ENCODE measurements at regions of chr16 and their contacts with region 1.

Region 1: DNA sequence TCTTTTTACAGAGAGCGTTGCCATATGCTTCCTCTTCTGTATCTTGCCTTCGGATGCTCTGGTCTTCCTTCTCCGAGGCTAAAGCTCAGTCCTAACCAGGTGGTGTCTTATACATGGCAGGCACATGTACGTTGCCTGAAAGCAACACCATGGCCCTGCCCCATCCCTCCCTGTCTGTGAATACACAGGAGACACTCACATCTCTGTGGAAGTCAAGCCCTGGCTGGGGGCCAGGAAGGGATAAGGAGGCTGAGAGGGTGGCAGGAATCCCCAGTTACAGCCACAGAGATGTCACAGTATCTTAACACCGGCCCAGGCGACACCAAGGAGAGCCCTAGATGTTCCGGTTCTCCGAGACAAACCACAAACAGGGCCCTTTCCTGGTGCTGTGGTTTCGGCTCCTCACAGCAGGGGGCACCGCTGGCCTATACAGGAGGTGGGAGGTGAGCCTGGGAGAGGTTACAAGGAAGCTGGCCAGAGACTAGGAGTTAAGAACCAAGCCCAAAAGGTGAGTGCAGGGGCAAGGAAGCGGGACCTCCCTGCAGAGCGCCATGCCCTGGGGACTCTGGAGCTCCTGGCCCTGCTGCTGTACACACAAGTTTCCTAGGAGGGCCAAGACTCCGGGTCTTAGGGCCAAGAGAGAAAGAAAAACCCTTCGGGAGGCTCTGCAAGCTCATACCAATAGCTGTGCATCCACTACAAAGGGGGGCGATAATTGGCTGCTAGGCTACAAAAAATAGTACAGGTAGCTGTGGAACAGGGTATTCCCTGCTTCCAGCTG is 41.7 kb downstream of the SRL start:
- DNase-seq: peak; percentile 70 to 74 (median 72)
- ATAC-seq: peak; percentile 95 to 99 (median 97)
- H3K4me3 ChIP-seq: no peak overlapping the region
- H3K27ac ChIP-seq: no peak overlapping the region
- H3K4me1 ChIP-seq: no peaks in the 10 kb centered on the region
- H3K27me3 ChIP-seq: no peaks in the 10 kb centered on the region
- CTCF ChIP-seq: peak; percentile 70 to 79 (median 72)
- POLR2A ChIP-seq: no peak

Region 2: DNA sequence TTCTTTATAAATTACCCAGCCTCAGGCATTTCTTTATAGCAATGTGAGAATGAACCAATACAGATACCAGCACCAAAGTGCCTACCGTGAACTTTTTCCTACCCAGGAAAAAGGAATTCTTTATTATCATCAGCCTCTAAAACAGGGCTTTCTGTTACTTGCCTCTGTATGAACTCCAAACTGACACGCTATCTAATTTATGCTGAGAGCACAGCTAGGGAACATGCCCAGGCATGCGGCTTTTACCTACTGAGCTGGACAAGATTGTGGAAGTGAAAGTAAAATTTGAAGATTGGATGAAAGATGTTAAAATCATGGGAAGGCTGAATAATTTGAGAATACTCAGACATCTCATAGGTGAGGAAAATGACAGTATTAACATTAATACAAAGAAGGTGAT is 59.5 kb before region 1 on chr16:
- intact Hi-C with region 1: no loop called
- DNase-seq: no peak
- ATAC-seq: peak in 1 of 4 donors; percentile 31
- H3K4me3 ChIP-seq: no peak overlapping the region
- H3K27ac ChIP-seq: no peak overlapping the region
- H3K4me1 ChIP-seq: no peaks in the 10 kb centered on the region
- H3K27me3 ChIP-seq: no peaks in the 10 kb centered on the region
- CTCF ChIP-seq: no peak
- POLR2A ChIP-seq: no peak

Region 3: GRCh38 chr16:4244254-4245076 is 44.3 kb after region 1 on chr16:
- intact Hi-C with region 1: loop called in 1 of 2 experiments (anchors 10 kb)
- DNase-seq: no peak
- ATAC-seq: no peak
- H3K4me3 ChIP-seq: no peak overlapping the region
- H3K27ac ChIP-seq: no peak overlapping the region
- H3K4me1 ChIP-seq: no peaks in the 10 kb centered on the region
- H3K27me3 ChIP-seq: no peaks in the 10 kb centered on the region
- CTCF ChIP-seq: no peak
- POLR2A ChIP-seq: no peak

Region 4: DNA sequence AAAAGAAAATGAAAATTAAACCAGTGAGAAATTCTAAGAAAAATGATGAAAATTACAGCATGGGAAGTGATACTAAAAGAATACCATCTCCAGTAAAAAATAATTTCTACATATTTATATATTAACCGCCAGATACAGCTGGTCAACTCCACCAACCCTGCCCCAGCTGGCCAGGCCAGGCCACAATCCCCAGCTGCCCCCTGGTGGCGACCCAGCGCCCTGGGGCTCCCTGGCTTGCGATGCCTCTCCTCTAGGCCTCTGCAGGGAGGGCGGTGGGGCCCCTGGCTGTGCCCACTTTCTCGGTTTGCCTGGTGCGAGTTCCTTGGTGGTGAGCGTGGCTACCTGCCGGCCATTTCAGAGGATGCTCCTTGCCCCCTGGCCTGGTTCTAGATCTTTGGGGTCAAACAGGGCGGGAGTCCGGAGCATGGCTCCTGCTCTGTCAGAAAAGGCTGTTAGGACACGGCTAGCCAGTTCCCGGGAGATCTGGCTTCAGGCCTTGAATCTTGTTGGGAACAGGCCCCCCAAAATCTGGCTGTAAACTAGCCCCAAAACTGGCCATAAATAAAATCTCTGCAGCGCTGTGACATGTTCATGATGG is 130.2 kb after region 1 on chr16:
- intact Hi-C with region 1: loop called (anchors 5 kb)
- DNase-seq: peak; percentile 84 to 88 (median 87)
- ATAC-seq: peak; percentile 74 to 82 (median 79)
- H3K4me3 ChIP-seq: no peak overlapping the region
- H3K27ac ChIP-seq: no peak overlapping the region
- H3K4me1 ChIP-seq: peaks cover 0 to 15% (median 5%) of the 10 kb centered on the region in 4 donors
- H3K27me3 ChIP-seq: no peaks in the 10 kb centered on the region
- CTCF ChIP-seq: peak; percentile 92 to 99 (median 98)
- POLR2A ChIP-seq: no peak

Region 5: DNA sequence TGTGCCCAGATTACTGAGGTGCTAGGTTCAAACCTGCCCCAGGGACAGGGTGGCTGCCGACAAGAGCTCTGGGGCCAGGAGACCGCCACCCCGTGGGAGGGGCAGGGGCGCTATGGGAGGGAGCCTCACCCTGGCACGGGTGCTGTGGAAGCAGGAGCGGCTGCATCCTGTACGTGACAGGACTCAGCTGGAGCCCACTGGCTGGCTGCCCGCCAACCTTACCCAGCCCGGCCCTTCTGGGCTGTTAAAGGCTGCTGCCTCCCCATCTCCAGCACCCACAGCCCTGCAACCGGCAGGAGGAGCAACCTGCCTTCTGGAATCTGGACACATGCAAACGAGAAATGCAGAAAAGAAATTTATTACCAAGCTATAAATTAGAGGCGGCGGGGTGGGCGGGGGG is 139.7 kb after region 1 on chr16:
- intact Hi-C with region 1: loop called in 1 of 2 experiments (anchors 5 kb)
- DNase-seq: peak in 1 of 3 donors; percentile 59
- ATAC-seq: no peak
- H3K4me3 ChIP-seq: no peak overlapping the region
- H3K27ac ChIP-seq: no peak overlapping the region
- H3K4me1 ChIP-seq: peaks cover 0 to 2% (median under 1%) of the 10 kb centered on the region in 4 donors
- H3K27me3 ChIP-seq: no peaks in the 10 kb centered on the region
- CTCF ChIP-seq: no peak
- POLR2A ChIP-seq: no peak

Region 6: DNA sequence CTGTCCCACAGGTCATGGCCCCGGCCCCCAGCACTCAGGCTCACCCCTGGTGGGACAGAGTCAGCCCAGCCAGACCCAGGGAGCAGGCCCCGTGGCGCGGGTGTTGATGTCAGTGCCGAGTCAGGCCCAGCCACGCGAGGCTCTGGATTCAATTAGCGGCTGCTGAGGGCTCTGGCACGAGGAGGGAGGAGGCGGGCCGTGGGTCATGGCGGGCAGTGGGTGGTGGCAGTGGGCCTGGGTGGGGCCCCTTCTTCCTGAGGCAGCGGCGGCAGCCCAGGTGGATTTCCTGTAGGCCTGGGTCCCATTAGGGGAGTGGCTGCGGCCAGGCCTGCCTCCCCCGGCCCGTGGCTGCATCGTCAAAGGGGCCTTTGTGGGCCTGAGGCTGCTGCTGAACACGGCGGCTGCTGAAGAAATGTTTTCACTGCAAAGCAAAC is 184.3 kb after region 1 on chr16:
- intact Hi-C with region 1: no loop called
- DNase-seq: peak in 1 of 3 donors; percentile 36
- ATAC-seq: peak in 2 of 4 donors; percentile 3 to 4
- H3K4me3 ChIP-seq: no peak overlapping the region
- H3K27ac ChIP-seq: no peak overlapping the region
- H3K4me1 ChIP-seq: peaks cover 0 to 19% (median 0%) of the 10 kb centered on the region in 4 donors
- H3K27me3 ChIP-seq: no peaks in the 10 kb centered on the region
- CTCF ChIP-seq: no peak
- POLR2A ChIP-seq: no peak